ENCODE measurements at regions of chr17 and their contacts with region 1.

Region 1: DNA sequence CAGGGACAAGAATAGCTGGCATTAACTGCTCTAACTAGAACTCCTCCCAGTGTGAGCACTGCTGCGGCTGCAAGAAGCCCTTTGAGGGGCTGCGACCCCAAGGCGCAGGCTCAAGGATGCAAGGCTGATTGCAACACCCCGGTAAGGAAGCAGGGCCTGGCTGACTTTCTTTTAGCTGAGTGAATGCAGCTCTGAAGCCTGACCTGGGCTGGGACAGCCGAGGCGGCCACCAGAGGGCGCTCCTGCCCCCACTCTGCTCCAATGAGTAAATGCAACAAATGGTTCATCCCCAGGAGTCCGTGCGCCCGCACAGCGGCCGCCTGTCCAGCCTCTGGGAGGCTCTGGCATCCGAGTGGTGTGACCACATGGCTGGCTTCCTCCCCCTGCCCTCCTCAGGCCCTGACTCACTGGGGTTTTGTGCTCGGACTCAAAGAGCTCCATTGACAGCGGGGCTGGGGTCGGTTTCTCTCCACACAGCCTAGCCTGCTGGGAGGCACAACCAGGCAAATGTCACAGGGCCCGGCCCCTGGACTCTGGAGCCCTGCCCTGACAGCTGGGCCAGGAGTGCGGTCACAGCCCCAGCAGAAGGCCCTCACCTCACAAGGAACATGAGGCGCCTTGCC is at the start of gene SMIM5:
- DNase-seq: peak; percentile 72 to 77 (median 75)
- H3K4me3 ChIP-seq: no peak within 1 kb of the TSS
- H3K4me3 Mint-ChIP-seq: peak within 1 kb of the TSS in 1 of 8 donors; percentile 26
- H3K27ac ChIP-seq: no peak within 1 kb of the TSS
- H3K27ac Mint-ChIP-seq: peak within 1 kb of the TSS in 1 of 7 donors; percentile 18
- H3K4me1 ChIP-seq: peaks cover 13% of the 10 kb centered on the region
- H3K4me1 Mint-ChIP-seq: peaks cover 2 to 13% (median 7%) of the 10 kb centered on the region in 4 donors
- H3K27me3 ChIP-seq: no peaks in the 10 kb centered on the region
- H3K27me3 Mint-ChIP-seq: no peaks in the 10 kb centered on the region
- total RNA-seq, gene SMIM5: not detected

Region 2: DNA sequence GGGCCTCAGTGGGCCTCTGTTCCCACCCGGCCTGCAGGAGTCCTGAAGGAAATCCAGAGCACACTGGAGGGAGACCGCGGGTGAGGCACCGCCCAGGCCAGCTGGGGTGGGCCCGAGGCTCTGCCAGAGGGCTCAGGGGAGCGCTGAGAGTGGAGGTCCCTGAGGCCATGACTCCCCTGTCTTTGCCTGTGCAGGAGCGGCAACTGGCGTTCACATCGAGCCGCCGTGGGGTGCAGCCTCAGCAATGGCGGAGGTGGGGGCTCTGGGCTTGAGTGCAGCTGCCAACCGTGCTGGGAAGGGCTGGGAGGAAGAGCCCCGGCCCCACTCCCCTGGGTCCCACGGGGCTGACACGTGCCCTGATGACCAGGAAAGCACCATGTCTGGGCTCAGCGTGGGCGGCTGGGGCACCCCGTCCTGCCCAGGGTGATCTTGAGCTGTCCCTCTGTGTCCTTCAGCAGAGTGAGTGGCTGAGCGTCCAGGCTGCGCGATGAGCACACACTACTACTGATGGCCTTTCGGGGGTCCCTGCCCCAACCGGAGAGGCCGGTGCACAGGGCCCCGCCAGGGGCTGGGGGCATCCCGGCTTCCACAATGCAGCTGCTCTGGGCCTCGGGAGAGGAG is 58.4 kb before region 1 on chr17:
- CTCF ChIA-PET with region 1: interaction called, 11 read pairs
- POLR2A ChIA-PET with region 1: no interaction called
- intact Hi-C with region 1: no loop called
- DNase-seq: no peak
- H3K4me3 ChIP-seq: no peak overlapping the region
- H3K4me3 Mint-ChIP-seq: no peak overlapping the region
- H3K27ac ChIP-seq: no peak overlapping the region
- H3K27ac Mint-ChIP-seq: no peak overlapping the region
- H3K4me1 ChIP-seq: no peaks in the 10 kb centered on the region
- H3K4me1 Mint-ChIP-seq: no peaks in the 10 kb centered on the region
- H3K27me3 ChIP-seq: no peaks in the 10 kb centered on the region
- H3K27me3 Mint-ChIP-seq: no peaks in the 10 kb centered on the region

Region 3: GRCh38 chr17:75611851-75612454 is 21.0 kb before region 1 on chr17:
- CTCF ChIA-PET with region 1: interaction called, 13 read pairs
- POLR2A ChIA-PET with region 1: no interaction called
- intact Hi-C with region 1: no loop called
- DNase-seq: no peak
- H3K4me3 ChIP-seq: no peak overlapping the region
- H3K4me3 Mint-ChIP-seq: no peak overlapping the region
- H3K27ac ChIP-seq: no peak overlapping the region
- H3K27ac Mint-ChIP-seq: no peak overlapping the region
- H3K4me1 ChIP-seq: no peaks in the 10 kb centered on the region
- H3K4me1 Mint-ChIP-seq: no peaks in the 10 kb centered on the region
- H3K27me3 ChIP-seq: no peaks in the 10 kb centered on the region
- H3K27me3 Mint-ChIP-seq: no peaks in the 10 kb centered on the region

Region 4: GRCh38 chr17:75652915-75653549 is 20.1 kb after region 1 on chr17:
- CTCF ChIA-PET with region 1: interaction called, 23 read pairs
- POLR2A ChIA-PET with region 1: no interaction called
- intact Hi-C with region 1: no loop called
- DNase-seq: peak in 1 of 5 donors; percentile 7
- H3K4me3 ChIP-seq: no peak overlapping the region
- H3K4me3 Mint-ChIP-seq: no peak overlapping the region
- H3K27ac ChIP-seq: no peak overlapping the region
- H3K27ac Mint-ChIP-seq: peak overlapping the region in 1 of 7 donors; percentile 18
- H3K4me1 ChIP-seq: no peaks in the 10 kb centered on the region
- H3K4me1 Mint-ChIP-seq: peaks cover 0 to 2% (median 0%) of the 10 kb centered on the region in 4 donors
- H3K27me3 ChIP-seq: no peaks in the 10 kb centered on the region
- H3K27me3 Mint-ChIP-seq: no peaks in the 10 kb centered on the region

Region 5: GRCh38 chr17:75679706-75680442 is 46.9 kb after region 1 on chr17:
- CTCF ChIA-PET with region 1: interaction called, 20 read pairs
- POLR2A ChIA-PET with region 1: no interaction called
- intact Hi-C with region 1: no loop called
- DNase-seq: no peak
- H3K4me3 ChIP-seq: no peak overlapping the region
- H3K4me3 Mint-ChIP-seq: no peak overlapping the region
- H3K27ac ChIP-seq: no peak overlapping the region
- H3K27ac Mint-ChIP-seq: peak overlapping the region in 2 of 7 donors; percentile 9 to 23
- H3K4me1 ChIP-seq: peaks cover 4% of the 10 kb centered on the region
- H3K4me1 Mint-ChIP-seq: peaks cover 14 to 27% (median 19%) of the 10 kb centered on the region in 4 donors
- H3K27me3 ChIP-seq: no peaks in the 10 kb centered on the region
- H3K27me3 Mint-ChIP-seq: no peaks in the 10 kb centered on the region

Region 6: GRCh38 chr17:75738218-75738802 is 105.3 kb after region 1 on chr17:
- CTCF ChIA-PET with region 1: interaction called, 10 read pairs
- POLR2A ChIA-PET with region 1: no interaction called
- intact Hi-C with region 1: no loop called
- DNase-seq: no peak
- H3K4me3 ChIP-seq: no peak overlapping the region
- H3K4me3 Mint-ChIP-seq: no peak overlapping the region
- H3K27ac ChIP-seq: no peak overlapping the region
- H3K27ac Mint-ChIP-seq: no peak overlapping the region
- H3K4me1 ChIP-seq: no peaks in the 10 kb centered on the region
- H3K4me1 Mint-ChIP-seq: peaks cover 2 to 7% (median 4%) of the 10 kb centered on the region in 4 donors
- H3K27me3 ChIP-seq: no peaks in the 10 kb centered on the region
- H3K27me3 Mint-ChIP-seq: no peaks in the 10 kb centered on the region

Measured in CD4-positive, alpha-beta memory T cell (primary cell).